PC-9 (cell line): ENCODE measurements at regions of chr2 and their contacts with region 1.

Region 1: GRCh38 chr2:112726497-112727190 is 5.8 kb downstream of the NT5DC4 start:
- DNase-seq: peak; percentile 87 to 95
- H3K4me3 ChIP-seq: no peak overlapping the region
- H3K27ac ChIP-seq: peak overlapping the region; percentile 77
- H3K4me1 ChIP-seq: peaks cover 26% of the 10 kb centered on the region
- H3K27me3 ChIP-seq: no peaks in the 10 kb centered on the region
- CTCF ChIP-seq: peak; percentile 96

Region 2: GRCh38 chr2:112275306-112275886 is 451.2 kb before region 1 on chr2 and contains the start of gene ZC3H6:
- CTCF ChIA-PET with region 1: no interaction called
- POLR2A ChIA-PET with region 1: no interaction called
- intact Hi-C with region 1: loop called (anchors 10 kb)
- DNase-seq: peak; percentile 87 to 98
- H3K4me3 ChIP-seq: peak within 1 kb of the TSS; percentile 98
- H3K27ac ChIP-seq: peak within 1 kb of the TSS; percentile 99
- H3K4me1 ChIP-seq: peaks cover 7% of the 10 kb centered on the region; the same call in 1 of the 2 replicates
- H3K27me3 ChIP-seq: no peaks in the 10 kb centered on the region
- CTCF ChIP-seq: no peak
- total RNA-seq, gene ZC3H6: 9.1 and 10.0 TPM in 2 replicates

Region 3: GRCh38 chr2:112584134-112584890 is 142.3 kb before region 1 on chr2 and contains the start of gene CHCHD5:
- CTCF ChIA-PET with region 1: interaction called, 3 read pairs
- POLR2A ChIA-PET with region 1: no interaction called
- intact Hi-C with region 1: loop called (anchors 2 kb)
- DNase-seq: peak; percentile 86 to 90
- H3K4me3 ChIP-seq: peak within 1 kb of the TSS; percentile 91
- H3K27ac ChIP-seq: peak within 1 kb of the TSS; percentile 92
- H3K4me1 ChIP-seq: peaks cover 24% of the 10 kb centered on the region
- H3K27me3 ChIP-seq: no peaks in the 10 kb centered on the region
- CTCF ChIP-seq: no peak; the same call in 1 of the 2 replicates
- total RNA-seq, gene CHCHD5: 38.4 and 64.3 TPM in 2 replicates

Region 4: DNA sequence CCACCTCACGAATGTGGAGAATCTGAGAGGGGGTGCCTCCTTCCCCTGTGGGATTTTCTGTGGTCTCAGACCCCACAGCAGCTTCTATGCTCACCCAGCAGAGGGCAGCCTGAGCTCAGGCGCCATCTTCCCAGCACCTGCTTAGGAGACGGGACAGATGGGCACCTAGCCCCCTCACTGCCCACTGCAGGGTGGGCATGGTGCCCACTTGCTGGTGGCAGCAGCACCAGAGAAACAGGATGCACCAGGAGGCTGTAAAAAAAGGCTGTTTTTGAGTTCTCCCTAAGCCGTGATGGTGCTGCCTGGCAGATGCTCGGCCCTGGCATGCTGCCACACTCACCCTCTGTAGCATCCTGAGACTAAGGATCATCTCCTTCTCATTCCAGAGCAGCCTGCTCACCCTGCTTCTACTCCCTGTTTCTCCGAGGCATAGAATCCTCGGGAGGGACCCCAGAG is 100.0 kb before region 1 on chr2:
- CTCF ChIA-PET with region 1: interaction called, 39 read pairs
- POLR2A ChIA-PET with region 1: interaction called, 4 read pairs
- intact Hi-C with region 1: loop called (anchors 1 kb)
- DNase-seq: peak in 1 of 2 experiments; percentile 65
- H3K4me3 ChIP-seq: peak overlapping the region; percentile 45; the same call in 1 of the 2 replicates
- H3K27ac ChIP-seq: peak overlapping the region; percentile 95
- H3K4me1 ChIP-seq: peaks cover 96% of the 10 kb centered on the region
- H3K27me3 ChIP-seq: no peaks in the 10 kb centered on the region
- CTCF ChIP-seq: peak; percentile 85

Region 5: GRCh38 chr2:112692496-112692911 is 34.1 kb before region 1 on chr2:
- CTCF ChIA-PET with region 1: interaction called, 11 read pairs
- POLR2A ChIA-PET with region 1: no interaction called
- intact Hi-C with region 1: loop called (anchors 2 kb)
- DNase-seq: peak; percentile 88 to 96
- H3K4me3 ChIP-seq: peak overlapping the region; percentile 12; the same call in 1 of the 2 replicates
- H3K27ac ChIP-seq: peak overlapping the region; percentile 77
- H3K4me1 ChIP-seq: peaks cover 46% of the 10 kb centered on the region
- H3K27me3 ChIP-seq: no peaks in the 10 kb centered on the region
- CTCF ChIP-seq: no peak

Region 6: DNA sequence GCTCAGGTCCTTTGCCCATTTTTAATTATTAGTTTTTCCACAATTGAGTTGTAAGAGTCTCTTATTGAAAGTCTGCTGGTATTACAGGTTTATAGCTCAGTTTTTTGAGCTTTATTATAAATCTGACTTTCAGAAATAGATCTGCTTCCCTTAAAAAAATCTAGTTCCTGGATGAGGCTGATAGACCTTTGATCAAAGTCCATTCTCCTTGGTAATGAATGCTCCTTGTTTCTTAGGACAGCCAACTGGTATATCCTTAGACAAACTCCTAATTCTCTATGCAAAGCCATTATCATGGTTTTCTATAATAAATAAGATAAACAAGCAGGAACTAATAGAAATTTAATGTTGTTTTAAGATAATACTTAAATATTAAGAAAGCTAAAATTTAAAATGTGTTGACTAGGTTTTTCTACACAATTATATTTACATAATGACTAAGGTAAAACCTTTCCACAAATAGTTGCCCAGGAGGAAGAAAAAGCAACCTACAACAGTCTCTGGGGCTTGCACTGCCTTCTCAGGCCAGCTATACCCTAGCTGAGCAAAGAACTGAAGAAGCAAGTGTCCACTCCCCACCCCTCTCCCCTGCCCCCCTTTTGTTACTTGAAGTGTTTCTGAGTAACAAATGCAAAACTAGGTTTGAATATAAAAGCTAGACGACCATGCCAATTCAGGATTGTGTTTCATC is 11.0 kb after region 1 on chr2:
- CTCF ChIA-PET with region 1: no interaction called
- POLR2A ChIA-PET with region 1: no interaction called
- intact Hi-C with region 1: no loop called
- DNase-seq: no peak
- H3K4me3 ChIP-seq: no peak overlapping the region
- H3K27ac ChIP-seq: peak overlapping the region; percentile 52
- H3K4me1 ChIP-seq: peaks cover 20% of the 10 kb centered on the region
- H3K27me3 ChIP-seq: no peaks in the 10 kb centered on the region
- CTCF ChIP-seq: no peak